ENCODE measurements at regions of chr1 and their contacts with region 1.

Region 1: DNA sequence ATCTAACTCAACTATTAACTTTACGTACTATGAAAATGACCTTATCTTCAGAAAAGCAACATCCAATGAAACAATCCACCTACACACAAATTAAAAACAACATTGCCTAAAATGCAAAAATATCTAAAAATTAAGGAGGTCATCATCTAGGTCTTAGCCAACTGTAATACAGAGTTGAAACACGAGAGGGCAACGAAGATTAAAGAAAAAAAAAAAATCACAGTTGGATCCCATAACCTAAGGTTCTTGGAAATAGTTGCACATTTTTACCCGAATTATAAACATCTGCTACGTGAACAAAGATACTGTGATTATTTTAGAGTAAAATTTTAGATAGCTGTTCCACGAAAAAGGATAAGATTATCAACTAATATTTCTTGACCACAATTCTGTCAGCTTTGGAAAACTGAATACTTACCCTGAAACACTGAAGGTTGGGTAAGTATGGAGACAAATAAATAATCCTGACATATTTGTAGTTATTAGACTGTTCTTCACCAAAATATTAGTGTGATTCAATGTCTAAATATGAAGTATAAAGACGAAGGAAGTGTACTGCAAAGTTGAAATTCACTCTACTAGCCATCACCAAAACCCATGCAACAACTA is 88.0 kb upstream of the AK4 start:
- DNase-seq: peak in 2 of 3 donors; percentile 30 to 41
- H3K4me3 ChIP-seq: no peak overlapping the region
- H3K4me3 Mint-ChIP-seq: no peak overlapping the region
- H3K27ac ChIP-seq: no peak overlapping the region
- H3K27ac Mint-ChIP-seq: peak overlapping the region in 1 of 7 donors; percentile 30
- H3K4me1 ChIP-seq: peaks cover 35 to 43% of the 10 kb centered on the region in 2 donors
- H3K4me1 Mint-ChIP-seq: peaks cover 59% of the 10 kb centered on the region
- H3K27me3 ChIP-seq: no peaks in the 10 kb centered on the region
- H3K27me3 Mint-ChIP-seq: peaks cover 0 to 2% (median 0%) of the 10 kb centered on the region in 3 donors
- CTCF ChIP-seq: peak; percentile 84

Region 2: GRCh38 chr1:64864018-64864940 is 195.8 kb before region 1 on chr1:
- intact Hi-C with region 1: loop called in 1 of 2 experiments (anchors 10 kb)
- DNase-seq: peak; percentile 95 to 99 (median 99)
- H3K4me3 ChIP-seq: peak overlapping the region in 2 of 3 experiments; percentile 19 to 44
- H3K4me3 Mint-ChIP-seq: peak overlapping the region; percentile 52 to 84
- H3K27ac ChIP-seq: peak overlapping the region; percentile 70 to 89
- H3K27ac Mint-ChIP-seq: peak overlapping the region; percentile 91 to 96 (median 94)
- H3K4me1 ChIP-seq: peaks cover 25 to 32% of the 10 kb centered on the region in 2 donors
- H3K4me1 Mint-ChIP-seq: peaks cover 37% of the 10 kb centered on the region
- H3K27me3 ChIP-seq: no peaks in the 10 kb centered on the region
- H3K27me3 Mint-ChIP-seq: peaks cover 0 to 2% (median 0%) of the 10 kb centered on the region in 3 donors
- CTCF ChIP-seq: no peak

Region 3: DNA sequence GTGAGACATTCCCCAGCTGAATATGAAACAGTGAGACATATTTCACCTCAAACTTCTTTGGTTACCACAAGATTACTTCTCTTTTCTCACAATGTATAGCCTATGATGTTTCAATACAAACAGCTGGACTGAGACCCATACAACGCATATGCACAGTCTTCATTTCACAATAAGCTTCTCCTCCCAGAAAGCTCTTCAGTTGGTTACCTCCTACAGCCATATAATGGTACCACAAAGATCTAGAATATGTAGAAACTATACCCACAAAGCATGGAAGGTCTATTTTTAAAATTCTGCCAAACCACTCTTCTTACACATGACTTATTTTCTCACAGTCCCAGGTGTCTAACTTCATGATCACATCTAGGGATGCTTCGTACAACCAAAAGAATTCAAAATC is 164.5 kb before region 1 on chr1:
- intact Hi-C with region 1: no loop called
- DNase-seq: peak; percentile 52 to 70 (median 67)
- H3K4me3 ChIP-seq: no peak overlapping the region
- H3K4me3 Mint-ChIP-seq: no peak overlapping the region
- H3K27ac ChIP-seq: no peak overlapping the region
- H3K27ac Mint-ChIP-seq: peak overlapping the region in 4 of 7 donors; percentile 9 to 75 (median 54)
- H3K4me1 ChIP-seq: peaks cover 20 to 36% of the 10 kb centered on the region in 2 donors
- H3K4me1 Mint-ChIP-seq: peaks cover 66% of the 10 kb centered on the region
- H3K27me3 ChIP-seq: no peaks in the 10 kb centered on the region
- H3K27me3 Mint-ChIP-seq: peaks cover 0 to 2% (median 0%) of the 10 kb centered on the region in 3 donors
- CTCF ChIP-seq: no peak

Region 4: DNA sequence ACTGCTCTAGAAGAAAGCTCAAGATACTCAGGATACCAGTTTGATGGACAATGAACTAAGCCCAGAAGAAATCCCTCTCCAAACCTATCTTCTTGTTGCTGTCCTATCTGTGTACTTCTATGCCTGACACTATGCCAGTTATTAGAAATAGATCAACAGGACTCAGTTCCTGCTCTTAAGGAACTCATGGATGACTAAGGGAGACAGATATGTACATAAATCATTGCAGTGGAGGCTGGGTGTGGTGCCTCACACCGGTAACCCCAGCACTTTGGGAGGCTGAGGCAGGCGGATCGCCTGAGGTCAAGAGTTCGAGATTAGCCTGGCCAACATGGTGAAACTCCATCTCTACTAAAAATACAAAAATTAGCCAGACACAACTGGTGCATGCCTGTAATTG is 45.6 kb after region 1 on chr1:
- intact Hi-C with region 1: no loop called
- DNase-seq: no peak
- H3K4me3 ChIP-seq: no peak overlapping the region
- H3K4me3 Mint-ChIP-seq: no peak overlapping the region
- H3K27ac ChIP-seq: no peak overlapping the region
- H3K27ac Mint-ChIP-seq: peak overlapping the region in 1 of 7 donors; percentile 25
- H3K4me1 ChIP-seq: peaks cover 0 to 8% of the 10 kb centered on the region in 2 donors
- H3K4me1 Mint-ChIP-seq: peaks cover 10% of the 10 kb centered on the region
- H3K27me3 ChIP-seq: no peaks in the 10 kb centered on the region
- H3K27me3 Mint-ChIP-seq: peaks cover 0 to 4% (median 0%) of the 10 kb centered on the region in 3 donors
- CTCF ChIP-seq: no peak

Region 5: GRCh38 chr1:65209005-65209885 is 149.2 kb after region 1 on chr1:
- intact Hi-C with region 1: loop called (anchors 2 to 5 kb)
- DNase-seq: peak; percentile 30 to 53 (median 39)
- H3K4me3 ChIP-seq: no peak overlapping the region
- H3K4me3 Mint-ChIP-seq: no peak overlapping the region
- H3K27ac ChIP-seq: no peak overlapping the region
- H3K27ac Mint-ChIP-seq: peak overlapping the region in 3 of 7 donors; percentile 28 to 75 (median 66)
- H3K4me1 ChIP-seq: peaks cover 21 to 24% of the 10 kb centered on the region in 2 donors
- H3K4me1 Mint-ChIP-seq: peaks cover 29% of the 10 kb centered on the region
- H3K27me3 ChIP-seq: no peaks in the 10 kb centered on the region
- H3K27me3 Mint-ChIP-seq: no peaks in the 10 kb centered on the region
- CTCF ChIP-seq: peak; percentile 75

Region 6: DNA sequence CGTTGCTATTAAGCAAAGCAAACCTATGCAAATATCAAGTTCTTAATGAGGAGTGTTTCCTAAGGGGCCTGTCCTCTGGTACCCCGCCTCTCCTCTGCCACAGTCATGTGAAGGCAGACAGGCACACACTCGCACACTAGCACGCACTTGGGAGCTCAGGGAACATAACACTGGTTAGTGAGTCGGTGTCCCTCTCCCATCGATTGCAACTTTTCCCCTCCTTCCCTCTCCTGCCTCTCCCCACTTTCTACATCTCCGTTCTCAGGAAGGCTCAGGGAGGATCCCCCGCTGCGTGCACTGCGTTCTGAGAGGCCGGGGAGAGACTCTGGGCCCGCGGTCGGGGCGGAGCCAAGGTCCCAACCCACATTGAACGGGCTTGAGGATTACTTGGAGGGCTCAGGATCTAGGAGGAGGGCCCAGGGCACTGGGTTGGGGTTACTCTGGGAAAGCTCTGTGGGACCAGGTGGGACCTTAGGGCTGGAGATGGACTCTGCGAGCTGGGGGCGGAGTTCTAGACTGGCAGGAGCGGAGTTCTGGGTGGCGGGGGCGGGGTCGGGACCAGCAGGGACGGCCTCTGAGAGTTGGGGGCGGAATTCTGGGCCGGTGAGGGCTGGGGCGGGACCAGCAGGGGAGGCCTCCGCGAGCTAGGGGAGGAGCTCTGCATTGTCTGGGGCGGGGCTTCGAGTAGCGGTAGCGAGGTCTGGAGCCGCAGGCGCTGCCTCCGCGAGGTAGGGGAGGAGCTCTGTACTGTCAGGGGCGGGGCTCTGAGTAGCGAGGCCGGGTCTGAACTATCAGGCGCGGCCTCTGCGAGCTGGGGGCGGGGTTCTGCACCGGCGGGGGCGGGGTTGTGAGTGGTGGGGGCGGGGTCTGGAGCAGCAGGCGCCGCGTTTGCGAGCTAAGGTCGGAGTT is 359.9 kb after region 1 on chr1:
- intact Hi-C with region 1: loop called (anchors 10 kb)
- DNase-seq: peak; percentile 97
- H3K4me3 ChIP-seq: peak overlapping the region; percentile 72 to 89 (median 79)
- H3K4me3 Mint-ChIP-seq: peak overlapping the region in 1 of 2 donors; percentile 96
- H3K27ac ChIP-seq: peak overlapping the region; percentile 95 to 100
- H3K27ac Mint-ChIP-seq: peak overlapping the region in 6 of 7 donors; percentile 84 to 97 (median 88)
- H3K4me1 ChIP-seq: peaks cover 35 to 41% of the 10 kb centered on the region in 2 donors
- H3K4me1 Mint-ChIP-seq: peaks cover 10% of the 10 kb centered on the region
- H3K27me3 ChIP-seq: no peaks in the 10 kb centered on the region
- H3K27me3 Mint-ChIP-seq: no peaks in the 10 kb centered on the region
- CTCF ChIP-seq: no peak

Region 7: GRCh38 chr1:65687428-65688214 is 627.6 kb after region 1 on chr1:
- intact Hi-C with region 1: loop called in 1 of 2 experiments (anchors 5 kb)
- DNase-seq: peak; percentile 57 to 67 (median 60)
- H3K4me3 ChIP-seq: no peak overlapping the region
- H3K4me3 Mint-ChIP-seq: no peak overlapping the region
- H3K27ac ChIP-seq: no peak overlapping the region
- H3K27ac Mint-ChIP-seq: no peak overlapping the region
- H3K4me1 ChIP-seq: peaks cover 22 to 24% of the 10 kb centered on the region in 2 donors
- H3K4me1 Mint-ChIP-seq: peaks cover 3% of the 10 kb centered on the region
- H3K27me3 ChIP-seq: no peaks in the 10 kb centered on the region
- H3K27me3 Mint-ChIP-seq: peaks cover 0 to 1% (median 0%) of the 10 kb centered on the region in 3 donors
- CTCF ChIP-seq: peak; percentile 98

Measured in CD14-positive monocyte (primary cell).